Caco-2 (cell line): ENCODE measurements at regions of chr5 and their contacts with region 1.

Region 1: DNA sequence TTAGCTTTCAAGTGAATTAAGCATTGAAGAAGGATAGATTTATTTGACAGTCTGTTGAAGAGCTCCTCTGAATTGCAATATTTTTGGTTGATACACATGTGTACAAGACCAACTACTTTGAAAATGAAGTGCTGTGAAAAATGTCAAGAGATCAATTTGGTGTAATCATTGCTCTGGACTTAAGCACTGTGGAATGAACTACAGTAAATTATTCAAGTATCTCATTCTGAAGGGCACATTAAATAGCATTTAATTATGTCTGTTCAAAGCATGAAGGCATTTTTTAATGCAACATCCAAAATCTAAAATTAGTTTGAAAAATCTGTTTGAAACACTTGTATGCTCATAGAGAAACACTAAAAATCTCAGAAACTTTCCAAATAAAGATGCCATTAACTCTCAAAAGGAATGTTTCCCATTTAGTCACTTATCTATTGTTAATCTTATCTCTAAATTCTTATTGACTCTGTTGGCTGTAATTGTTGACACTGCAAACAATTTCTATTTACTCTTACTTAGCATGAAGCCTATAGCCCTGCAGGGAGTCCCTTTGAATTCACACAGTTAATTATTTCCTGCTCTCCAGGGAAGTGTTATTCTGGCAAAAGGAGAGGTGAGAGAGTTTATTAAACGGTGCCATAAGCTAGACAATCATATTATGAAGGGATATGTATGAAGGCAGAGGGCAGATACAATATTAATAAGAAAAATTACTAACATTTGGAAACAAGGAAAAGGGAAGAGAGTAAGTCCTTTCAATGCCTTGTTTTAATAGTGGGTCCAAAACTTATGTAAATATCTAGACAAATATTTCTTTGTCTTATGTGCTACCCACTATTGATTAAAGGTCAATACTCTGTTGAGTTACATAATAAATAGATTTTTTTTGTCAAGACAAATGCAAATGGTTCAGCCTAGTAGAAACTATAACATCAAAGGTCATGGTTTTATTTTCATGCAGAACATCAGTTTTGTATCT is 107.3 kb downstream of the CDH18 start:
- DNase-seq: peak; percentile 48 to 70
- H3K4me3 ChIP-seq: no peak overlapping the region
- H3K4me3 Mint-ChIP-seq: peak overlapping the region; percentile 11
- H3K27ac Mint-ChIP-seq: no peak overlapping the region
- H3K4me1 ChIP-seq: peaks cover 27% of the 10 kb centered on the region
- H3K4me1 Mint-ChIP-seq: peaks cover 13% of the 10 kb centered on the region
- H3K27me3 ChIP-seq: no peaks in the 10 kb centered on the region
- H3K27me3 Mint-ChIP-seq: no peaks in the 10 kb centered on the region
- CTCF ChIP-seq: no peak

Region 2: GRCh38 chr5:19795218-19795617 is 85.5 kb before region 1 on chr5:
- CTCF ChIA-PET with region 1: no interaction called
- POLR2A ChIA-PET with region 1: no interaction called
- intact Hi-C with region 1: loop called (anchors 5 kb)
- DNase-seq: peak in 1 of 2 experiments; percentile 25
- H3K4me3 ChIP-seq: no peak overlapping the region
- H3K4me3 Mint-ChIP-seq: no peak overlapping the region
- H3K27ac Mint-ChIP-seq: no peak overlapping the region
- H3K4me1 ChIP-seq: no peaks in the 10 kb centered on the region
- H3K4me1 Mint-ChIP-seq: no peaks in the 10 kb centered on the region
- H3K27me3 ChIP-seq: no peaks in the 10 kb centered on the region
- H3K27me3 Mint-ChIP-seq: no peaks in the 10 kb centered on the region
- CTCF ChIP-seq: peak in 1 of 2 experiments; percentile 38

Region 3: DNA sequence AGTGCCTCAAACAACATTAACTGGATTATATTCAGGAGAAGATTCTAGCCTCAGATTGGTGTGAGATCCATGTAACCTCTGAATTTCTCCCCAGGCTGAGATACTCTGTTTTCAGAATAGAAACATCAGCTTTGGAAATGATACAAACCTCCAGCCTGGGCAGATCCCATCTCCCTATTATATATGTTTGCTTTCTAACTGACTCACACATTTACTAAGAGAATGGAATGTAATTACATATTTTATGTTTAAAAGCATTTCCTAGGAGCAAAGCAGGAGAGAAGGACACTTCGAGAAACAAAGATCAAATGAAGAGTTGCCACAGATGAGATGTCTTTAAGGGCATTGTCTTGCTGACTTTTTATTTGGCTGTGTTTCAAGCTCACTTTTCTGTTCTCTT is 10.9 kb after region 1 on chr5:
- CTCF ChIA-PET with region 1: no interaction called
- POLR2A ChIA-PET with region 1: interaction called, 3 read pairs
- intact Hi-C with region 1: loop called (anchors 1 kb)
- DNase-seq: no peak
- H3K4me3 ChIP-seq: no peak overlapping the region
- H3K4me3 Mint-ChIP-seq: no peak overlapping the region
- H3K27ac Mint-ChIP-seq: no peak overlapping the region
- H3K4me1 ChIP-seq: peaks cover 27% of the 10 kb centered on the region
- H3K4me1 Mint-ChIP-seq: peaks cover 21% of the 10 kb centered on the region
- H3K27me3 ChIP-seq: no peaks in the 10 kb centered on the region
- H3K27me3 Mint-ChIP-seq: no peaks in the 10 kb centered on the region
- CTCF ChIP-seq: no peak

Region 4: GRCh38 chr5:19928562-19929421 is 48.0 kb after region 1 on chr5:
- CTCF ChIA-PET with region 1: no interaction called
- POLR2A ChIA-PET with region 1: no interaction called
- intact Hi-C with region 1: loop called (anchors 2 kb)
- DNase-seq: no peak
- H3K4me3 ChIP-seq: no peak overlapping the region
- H3K4me3 Mint-ChIP-seq: no peak overlapping the region
- H3K27ac Mint-ChIP-seq: peak overlapping the region; percentile 33
- H3K4me1 ChIP-seq: peaks cover 27% of the 10 kb centered on the region
- H3K4me1 Mint-ChIP-seq: peaks cover 19% of the 10 kb centered on the region
- H3K27me3 ChIP-seq: no peaks in the 10 kb centered on the region
- H3K27me3 Mint-ChIP-seq: no peaks in the 10 kb centered on the region
- CTCF ChIP-seq: no peak

Region 5: DNA sequence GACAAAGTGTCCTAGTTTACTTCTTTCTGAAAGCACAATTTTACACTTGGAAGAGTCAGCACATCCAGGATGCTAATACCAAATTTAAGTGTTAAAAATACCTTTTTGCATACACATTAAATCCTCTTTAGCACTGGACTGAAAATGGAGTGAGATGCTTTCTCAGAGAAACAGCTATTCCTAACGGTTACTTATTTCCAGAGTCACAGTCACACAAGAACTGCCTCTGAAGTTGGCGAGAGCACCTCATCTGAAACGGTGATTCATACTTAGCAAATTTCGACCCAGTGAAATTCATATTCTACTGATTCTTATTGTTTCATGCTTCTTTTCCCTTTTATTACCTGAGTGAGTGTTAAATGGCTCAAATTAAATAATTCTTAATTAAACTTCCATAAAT is 95.0 kb after region 1 on chr5:
- CTCF ChIA-PET with region 1: no interaction called
- POLR2A ChIA-PET with region 1: no interaction called
- intact Hi-C with region 1: no loop called
- DNase-seq: no peak
- H3K4me3 ChIP-seq: no peak overlapping the region
- H3K4me3 Mint-ChIP-seq: no peak overlapping the region
- H3K27ac Mint-ChIP-seq: no peak overlapping the region
- H3K4me1 ChIP-seq: no peaks in the 10 kb centered on the region
- H3K4me1 Mint-ChIP-seq: no peaks in the 10 kb centered on the region
- H3K27me3 ChIP-seq: no peaks in the 10 kb centered on the region
- H3K27me3 Mint-ChIP-seq: peaks cover 3% of the 10 kb centered on the region
- CTCF ChIP-seq: no peak

Region 6: GRCh38 chr5:20129491-20129890 is 248.7 kb after region 1 on chr5:
- CTCF ChIA-PET with region 1: no interaction called
- POLR2A ChIA-PET with region 1: no interaction called
- intact Hi-C with region 1: loop called (anchors 1 kb)
- DNase-seq: peak in 1 of 2 experiments; percentile 50
- H3K4me3 ChIP-seq: no peak overlapping the region
- H3K4me3 Mint-ChIP-seq: no peak overlapping the region
- H3K27ac Mint-ChIP-seq: no peak overlapping the region
- H3K4me1 ChIP-seq: peaks cover 6% of the 10 kb centered on the region; the same call in 1 of the 2 replicates
- H3K4me1 Mint-ChIP-seq: peaks cover 14% of the 10 kb centered on the region
- H3K27me3 ChIP-seq: no peaks in the 10 kb centered on the region
- H3K27me3 Mint-ChIP-seq: no peaks in the 10 kb centered on the region
- CTCF ChIP-seq: no peak